ENCODE measurements at regions of chr2 and their contacts with region 1.

Region 1: DNA sequence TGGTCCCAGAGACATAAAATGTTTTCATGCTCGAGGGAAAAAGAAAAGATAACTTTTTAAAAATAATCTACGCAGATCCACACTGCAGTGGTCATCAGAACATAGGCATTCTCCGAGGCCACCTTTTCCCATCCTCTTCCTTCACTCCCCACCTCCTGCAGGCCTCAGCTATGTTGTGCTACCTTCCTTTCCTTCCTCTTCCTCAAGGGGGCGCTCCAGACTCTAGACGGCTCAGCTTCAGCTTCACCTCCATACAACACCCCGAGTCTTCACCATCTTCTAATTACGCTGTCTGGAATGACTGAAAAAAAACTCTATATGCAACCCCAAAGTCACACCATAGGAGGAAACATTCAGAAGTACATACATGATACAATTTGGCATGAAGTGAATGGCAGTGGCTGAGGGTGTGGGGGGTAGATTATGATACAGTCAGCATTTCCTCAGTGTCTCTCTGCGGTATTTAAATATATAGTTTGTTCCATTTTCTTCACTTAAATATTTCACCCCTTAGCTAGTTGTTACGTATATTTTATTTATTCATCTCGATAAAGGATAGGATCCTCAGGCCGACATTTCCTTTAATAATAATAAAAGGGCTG is 583.6 kb downstream of the IRS1 start:
- DNase-seq: peak; percentile 78
- H3K4me3 ChIP-seq: no peak overlapping the region
- H3K27ac ChIP-seq: no peak overlapping the region
- H3K4me1 ChIP-seq: no peaks in the 10 kb centered on the region
- H3K27me3 ChIP-seq: no peaks in the 10 kb centered on the region
- CTCF ChIP-seq: peak; percentile 71

Region 2: DNA sequence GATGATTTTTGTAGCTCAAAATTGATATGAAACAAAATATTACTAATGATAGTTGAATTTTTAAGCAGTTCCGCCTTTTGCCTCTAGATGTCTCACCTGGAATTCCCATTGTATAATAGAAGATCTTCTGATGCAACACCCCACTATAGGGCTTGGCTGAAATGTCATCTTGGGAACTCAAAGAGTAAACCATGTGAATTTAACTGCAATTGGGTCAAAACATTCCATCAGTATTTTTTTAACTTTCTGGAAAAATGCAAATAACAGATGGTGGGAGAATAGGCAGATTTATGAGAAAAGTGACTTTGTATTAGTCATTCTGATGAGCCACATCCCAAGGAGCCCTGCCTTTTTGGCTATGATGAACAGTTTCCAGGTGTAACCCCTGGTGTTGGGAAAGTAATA is 326.6 kb before region 1 on chr2:
- intact Hi-C with region 1: loop called (anchors 10 kb)
- DNase-seq: peak; percentile 30
- H3K4me3 ChIP-seq: no peak overlapping the region
- H3K27ac ChIP-seq: no peak overlapping the region
- H3K4me1 ChIP-seq: no peaks in the 10 kb centered on the region
- H3K27me3 ChIP-seq: no peaks in the 10 kb centered on the region
- CTCF ChIP-seq: peak; percentile 57

Region 3: DNA sequence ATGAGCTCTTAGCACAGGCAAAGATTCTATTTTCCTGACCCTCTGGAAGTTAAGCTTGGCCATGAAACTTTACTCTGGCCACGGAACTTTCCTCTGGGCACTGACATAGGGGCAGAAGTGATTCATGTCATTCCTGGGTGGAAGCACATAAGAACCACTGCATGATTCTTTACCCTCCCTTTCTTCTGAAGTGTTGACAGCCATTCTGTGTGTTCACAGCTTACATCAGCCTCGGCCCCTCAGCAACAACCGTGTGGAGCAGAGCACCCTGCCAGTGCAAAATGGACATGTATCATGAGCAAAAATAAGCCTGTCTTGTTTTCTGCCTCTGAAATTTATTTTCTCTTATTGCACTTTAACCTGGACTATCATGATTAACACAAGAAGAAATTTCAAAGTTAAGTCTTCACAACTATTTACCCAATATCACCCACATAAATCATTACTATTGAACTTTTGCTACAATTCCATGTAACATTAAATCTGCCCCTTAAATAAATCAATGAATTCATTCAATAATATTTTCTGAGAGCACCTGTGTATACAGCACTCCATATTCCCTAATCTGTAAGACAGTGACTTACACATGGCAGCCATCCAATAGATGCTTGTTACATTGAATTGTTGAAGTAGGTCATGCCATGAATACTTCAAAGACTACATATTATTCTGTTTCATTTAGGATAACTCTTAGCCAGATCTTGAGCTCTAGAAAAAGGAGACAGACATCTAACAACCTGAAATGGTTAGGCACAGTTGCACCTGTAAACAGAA is 51.7 kb after region 1 on chr2:
- intact Hi-C with region 1: no loop called
- DNase-seq: no peak
- H3K4me3 ChIP-seq: no peak overlapping the region
- H3K27ac ChIP-seq: no peak overlapping the region
- H3K4me1 ChIP-seq: no peaks in the 10 kb centered on the region
- H3K27me3 ChIP-seq: no peaks in the 10 kb centered on the region
- CTCF ChIP-seq: no peak

Region 4: DNA sequence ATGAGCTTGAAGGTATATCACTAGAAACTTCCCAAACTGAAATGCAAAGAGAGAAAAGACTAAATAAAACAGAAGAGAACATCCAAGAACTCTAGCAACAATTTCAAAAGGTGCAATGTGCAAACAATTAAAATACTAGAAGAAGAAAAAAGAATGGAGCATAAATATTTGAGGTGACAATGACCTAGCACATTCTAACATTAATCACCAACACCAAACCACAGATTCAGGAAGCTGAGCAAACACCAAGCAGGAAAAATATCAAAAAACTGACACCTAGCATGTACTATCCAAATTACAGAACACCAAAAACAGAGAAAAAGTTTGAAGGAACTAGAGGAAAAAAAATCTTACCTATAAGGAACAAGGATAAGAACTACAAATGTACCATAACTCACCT is 122.8 kb after region 1 on chr2:
- intact Hi-C with region 1: no loop called
- DNase-seq: no peak
- H3K4me3 ChIP-seq: no peak overlapping the region
- H3K27ac ChIP-seq: no peak overlapping the region
- H3K4me1 ChIP-seq: no peaks in the 10 kb centered on the region
- H3K27me3 ChIP-seq: no peaks in the 10 kb centered on the region
- CTCF ChIP-seq: no peak

Measured in colonic mucosa (tissue), 4 donors.